ENCODE measurements at regions of chr20 and their contacts with region 1.

Region 1: DNA sequence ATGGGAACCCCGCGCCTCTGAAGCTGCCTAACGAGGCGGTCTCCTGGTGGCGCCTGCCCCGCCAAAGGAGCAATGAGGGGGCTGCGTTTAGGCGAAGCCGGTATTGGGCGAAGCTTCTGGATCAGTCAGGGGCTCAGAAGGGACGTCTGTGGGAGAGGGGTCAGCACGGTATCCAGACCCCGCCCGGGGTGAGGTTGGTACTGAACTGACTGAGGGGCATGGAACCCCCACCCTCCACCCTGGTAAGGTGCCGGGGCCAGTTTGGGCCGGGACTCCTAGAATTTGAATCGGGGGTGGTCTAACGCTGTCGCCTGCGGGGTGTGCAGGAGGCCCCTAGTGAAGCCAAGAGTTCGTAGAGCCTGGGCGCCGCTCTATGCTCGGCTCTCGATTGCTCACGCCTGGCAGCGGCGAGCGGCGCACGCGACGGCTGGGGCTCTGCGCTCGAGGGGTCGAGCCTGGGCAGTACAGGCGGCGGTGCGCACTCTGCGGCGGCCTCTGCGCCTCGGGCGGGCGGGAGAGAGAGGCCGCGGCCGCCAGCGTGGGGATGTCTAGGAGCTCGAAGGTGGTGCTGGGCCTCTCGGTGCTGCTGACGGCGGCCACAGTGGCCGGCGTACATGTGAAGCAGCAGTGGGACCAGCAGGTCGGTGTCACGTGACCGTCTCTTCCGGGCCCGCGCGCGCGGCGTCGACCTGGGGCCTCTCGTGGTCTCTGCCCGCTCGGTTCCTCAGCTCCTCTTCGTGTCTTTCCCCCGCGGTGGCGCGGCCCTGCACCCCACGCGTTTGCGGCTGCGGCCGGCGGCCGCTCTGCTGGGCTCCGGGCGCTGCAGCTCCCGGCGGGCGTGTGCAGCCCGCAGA is at the starts of genes KAT14 and PET117:
- DNase-seq: peak; percentile 96
- ATAC-seq: peak; percentile 91
- H3K4me3 Mint-ChIP-seq: peak within 1 kb of the TSS; percentile 90
- H3K27ac Mint-ChIP-seq: peak within 1 kb of the TSS; percentile 87
- H3K4me1 Mint-ChIP-seq: peaks cover 23% of the 10 kb centered on the region
- H3K27me3 Mint-ChIP-seq: no peaks in the 10 kb centered on the region
- CTCF ChIP-seq: no peak
- total RNA-seq, gene KAT14: 14.9 and 15.6 TPM in 2 replicates
- total RNA-seq, gene PET117: 10.1 and 13.6 TPM in 2 replicates

Region 2: GRCh38 chr20:17569616-17570346 is 567.9 kb before region 1 on chr20 and contains the start of gene DSTN:
- CTCF ChIA-PET with region 1: no interaction called
- POLR2A ChIA-PET with region 1: interaction called, 3 read pairs
- intact Hi-C with region 1: loop called (anchors 2 kb)
- DNase-seq: peak; percentile 88
- ATAC-seq: peak; percentile 89
- H3K4me3 Mint-ChIP-seq: peak within 1 kb of the TSS; percentile 93
- H3K27ac Mint-ChIP-seq: peak within 1 kb of the TSS; percentile 85
- H3K4me1 Mint-ChIP-seq: peaks cover 16% of the 10 kb centered on the region
- H3K27me3 Mint-ChIP-seq: peaks cover 2% of the 10 kb centered on the region
- CTCF ChIP-seq: no peak
- total RNA-seq, gene DSTN: 14.4 and 20.1 TPM in 2 replicates

Region 3: DNA sequence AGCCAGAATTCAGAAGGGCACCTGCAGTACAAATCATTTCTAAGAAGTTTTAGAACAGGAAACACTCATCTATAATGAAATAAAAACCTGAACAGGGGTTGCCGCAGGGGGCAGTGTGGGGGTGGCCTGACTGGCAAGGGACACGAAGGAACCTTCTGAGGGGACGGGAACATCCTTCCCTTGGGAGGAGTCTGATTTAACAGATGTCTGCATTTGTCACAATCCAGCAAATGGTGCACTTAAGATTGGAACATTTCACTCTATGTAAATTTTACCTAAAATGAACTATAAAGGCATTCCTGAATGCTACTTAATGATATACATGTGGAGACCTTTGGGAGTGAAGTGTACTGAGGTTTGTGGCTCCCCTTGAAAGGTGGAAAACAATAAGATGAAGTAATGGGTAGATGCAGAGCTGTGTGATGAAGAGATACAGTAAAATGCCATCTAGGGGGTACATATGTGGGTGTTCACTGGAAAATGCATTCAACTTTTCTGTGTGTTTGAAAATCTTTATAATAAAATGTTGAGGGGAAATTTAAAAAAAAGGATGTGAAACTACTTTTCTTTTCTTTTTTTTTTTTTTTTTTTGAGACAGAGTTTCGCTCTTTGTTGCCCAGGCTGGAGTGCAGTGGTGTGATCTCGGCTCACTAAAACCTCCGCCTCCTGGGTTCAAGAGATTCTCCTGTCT is 258.6 kb before region 1 on chr20:
- CTCF ChIA-PET with region 1: no interaction called
- POLR2A ChIA-PET with region 1: no interaction called
- intact Hi-C with region 1: no loop called
- DNase-seq: no peak
- ATAC-seq: peak; percentile 70
- H3K4me3 Mint-ChIP-seq: peak overlapping the region; percentile 44
- H3K27ac Mint-ChIP-seq: peak overlapping the region; percentile 71
- H3K4me1 Mint-ChIP-seq: peaks cover 67% of the 10 kb centered on the region
- H3K27me3 Mint-ChIP-seq: peaks cover 1% of the 10 kb centered on the region
- CTCF ChIP-seq: no peak

Region 4: DNA sequence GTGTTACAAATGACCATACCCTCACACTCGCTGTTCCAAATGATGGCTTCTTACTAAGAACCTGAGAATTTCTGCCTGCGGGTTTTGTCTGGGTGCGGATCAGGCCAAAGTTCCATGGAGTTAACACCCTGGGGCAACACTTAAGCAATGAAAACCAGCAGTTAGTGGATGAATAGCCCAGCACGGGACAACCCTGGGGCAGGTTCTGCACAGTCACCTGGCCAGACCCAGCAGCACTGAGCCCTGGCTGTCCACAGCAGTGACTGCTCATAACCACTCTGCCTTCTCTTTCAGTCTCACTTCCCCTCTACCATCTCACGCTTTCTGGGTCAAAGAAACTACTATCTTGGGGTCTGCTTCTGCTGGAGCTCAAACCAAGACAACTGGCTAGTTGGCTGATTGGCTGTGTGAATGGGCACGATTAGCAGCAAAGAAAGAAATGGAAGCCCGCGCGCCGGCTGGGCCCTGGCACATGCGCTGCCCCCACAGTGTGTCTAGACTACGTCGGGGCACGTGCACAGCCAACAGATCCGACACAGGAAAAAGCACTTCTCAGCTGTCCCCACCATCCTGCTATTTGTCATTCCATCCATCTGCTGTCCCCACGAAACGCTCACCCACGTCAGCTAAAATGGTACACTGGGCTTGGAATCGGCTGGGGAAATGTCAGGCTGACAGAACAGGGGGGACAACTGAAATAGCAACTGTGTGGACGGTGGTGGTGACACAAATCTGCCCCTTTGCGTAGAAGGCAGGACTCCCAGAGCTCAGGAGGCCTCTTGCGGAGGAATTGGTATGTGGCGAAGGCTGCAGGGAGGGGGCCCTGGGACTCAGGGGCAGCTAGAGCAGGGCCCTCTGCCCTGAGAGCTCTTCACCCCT is 132.2 kb before region 1 on chr20:
- CTCF ChIA-PET with region 1: no interaction called
- POLR2A ChIA-PET with region 1: interaction called, 7 read pairs
- intact Hi-C with region 1: loop called (anchors 1 kb)
- DNase-seq: peak; percentile 26
- ATAC-seq: peak; percentile 86
- H3K4me3 Mint-ChIP-seq: peak overlapping the region; percentile 67
- H3K27ac Mint-ChIP-seq: peak overlapping the region; percentile 81
- H3K4me1 Mint-ChIP-seq: peaks cover 33% of the 10 kb centered on the region
- H3K27me3 Mint-ChIP-seq: no peaks in the 10 kb centered on the region
- CTCF ChIP-seq: no peak

Region 5: DNA sequence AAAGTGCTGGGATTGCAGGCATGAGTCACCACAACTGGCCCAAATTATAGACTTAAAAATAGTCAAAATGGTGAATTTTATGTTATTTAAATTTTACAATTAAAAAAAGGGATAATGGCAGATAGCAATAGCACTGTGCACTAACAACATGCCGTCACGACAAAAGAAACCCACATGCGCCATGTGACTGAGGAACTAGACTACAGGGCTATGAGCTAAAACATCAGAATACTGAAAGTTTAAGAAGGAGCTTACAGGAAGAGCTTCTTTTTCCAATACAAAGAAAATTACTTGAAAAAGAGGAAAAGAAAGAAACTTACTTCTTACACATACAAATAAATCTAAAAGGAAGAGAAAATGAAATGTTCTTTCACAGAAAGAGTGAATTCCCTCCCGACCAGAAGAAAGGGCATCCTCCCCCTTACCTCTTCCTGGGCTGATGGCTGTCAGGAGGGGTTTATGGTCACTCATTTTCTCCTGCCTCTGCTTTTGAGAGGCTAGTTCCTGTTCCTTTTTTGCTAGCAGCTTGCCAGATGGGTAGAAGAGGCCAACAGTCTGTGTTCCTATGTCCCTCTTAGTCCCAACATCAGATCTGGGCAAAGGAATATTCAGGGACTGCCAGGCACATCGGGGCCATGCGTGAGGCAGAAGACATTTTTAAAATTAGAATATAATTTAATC is 274.7 kb after region 1 on chr20:
- CTCF ChIA-PET with region 1: no interaction called
- POLR2A ChIA-PET with region 1: no interaction called
- intact Hi-C with region 1: loop called (anchors 5 kb)
- DNase-seq: no peak
- ATAC-seq: peak; percentile 41
- H3K4me3 Mint-ChIP-seq: peak overlapping the region; percentile 69
- H3K27ac Mint-ChIP-seq: peak overlapping the region; percentile 88
- H3K4me1 Mint-ChIP-seq: peaks cover 18% of the 10 kb centered on the region
- H3K27me3 Mint-ChIP-seq: no peaks in the 10 kb centered on the region
- CTCF ChIP-seq: no peak

Region 6: DNA sequence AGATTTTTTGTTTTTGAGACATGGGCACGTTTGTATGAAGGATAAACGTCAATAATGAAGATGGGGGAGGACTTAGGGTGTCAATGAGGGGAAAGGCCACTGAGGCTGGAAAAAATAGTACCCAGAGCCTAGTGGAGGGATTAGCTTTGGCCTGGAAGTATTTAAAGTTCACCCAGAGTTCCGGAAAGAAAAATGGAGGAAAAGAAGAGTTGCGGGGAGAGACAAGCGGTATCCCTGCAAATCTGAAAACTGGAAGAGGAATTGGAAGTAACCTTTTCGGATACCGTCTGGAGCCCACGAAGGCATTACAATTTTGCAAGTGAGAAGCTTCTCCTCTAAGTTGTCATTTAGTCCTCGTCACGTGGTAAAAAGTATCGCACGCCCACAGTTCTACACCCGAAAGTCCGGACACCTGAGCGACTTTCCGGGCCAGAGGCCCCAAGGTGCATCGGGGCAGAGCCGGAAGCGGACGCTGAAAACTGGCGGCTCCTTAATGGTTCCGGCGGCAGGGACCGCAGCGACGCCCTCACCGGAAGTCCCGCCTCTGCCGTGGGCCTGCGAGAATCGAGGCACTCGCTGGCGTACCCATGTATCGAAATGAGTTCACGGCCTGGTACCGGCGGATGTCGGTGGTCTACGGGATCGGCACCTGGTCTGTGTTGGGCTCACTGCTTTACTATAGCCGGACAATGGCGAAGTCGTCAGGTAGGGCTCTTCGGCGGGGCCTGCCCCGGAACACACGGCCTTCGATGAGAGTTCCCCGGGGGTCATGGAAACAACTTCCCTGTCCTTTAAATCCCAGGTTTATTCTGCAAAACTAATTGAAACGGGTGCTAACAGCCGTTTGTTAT is 429.5 kb after region 1 on chr20 and contains the start of gene SMIM26:
- CTCF ChIA-PET with region 1: no interaction called
- POLR2A ChIA-PET with region 1: no interaction called
- intact Hi-C with region 1: loop called (anchors 1 kb)
- DNase-seq: peak; percentile 91
- ATAC-seq: peak; percentile 96
- H3K4me3 Mint-ChIP-seq: peak within 1 kb of the TSS; percentile 94
- H3K27ac Mint-ChIP-seq: peak within 1 kb of the TSS; percentile 94
- H3K4me1 Mint-ChIP-seq: peaks cover 23% of the 10 kb centered on the region
- H3K27me3 Mint-ChIP-seq: no peaks in the 10 kb centered on the region
- CTCF ChIP-seq: no peak
- total RNA-seq, gene SMIM26: 48.9 and 51.7 TPM in 2 replicates